ENCODE measurements at regions of chr12 and their contacts with region 1.

Region 1: GRCh38 chr12:111396726-111397445 is 8.8 kb upstream of the SH2B3 start:
- DNase-seq: peak; percentile 76 to 89
- H3K4me3 ChIP-seq: peak overlapping the region; percentile 26 to 34
- H3K27ac ChIP-seq: peak overlapping the region in 1 of 2 donors; percentile 14
- H3K4me1 ChIP-seq: peaks cover 0 to 9% (median 6%) of the 10 kb centered on the region in 4 donors
- H3K27me3 ChIP-seq: peaks cover 0 to 2% of the 10 kb centered on the region in 2 donors
- CTCF ChIP-seq: peak; percentile 99 to 100

Region 2: GRCh38 chr12:111673503-111673902 is 276.6 kb after region 1 on chr12:
- intact Hi-C with region 1: loop called (anchors 10 kb)
- DNase-seq: no peak
- H3K4me3 ChIP-seq: no peak overlapping the region
- H3K27ac ChIP-seq: peak overlapping the region in 1 of 2 donors; percentile 19
- H3K4me1 ChIP-seq: peaks cover 0 to 11% (median 5%) of the 10 kb centered on the region in 4 donors
- H3K27me3 ChIP-seq: no peaks in the 10 kb centered on the region
- CTCF ChIP-seq: peak; percentile 28 to 36